ENCODE measurements at regions of chr5 and their contacts with region 1.

Region 1: GRCh38 chr5:83265318-83265717 is 188.0 kb downstream of the XRCC4 start:
- DNase-seq: no peak
- H3K4me3 ChIP-seq: no peak overlapping the region
- H3K27ac ChIP-seq: no peak overlapping the region
- H3K4me1 ChIP-seq: no peaks in the 10 kb centered on the region
- CTCF ChIP-seq: no peak

Region 2: DNA sequence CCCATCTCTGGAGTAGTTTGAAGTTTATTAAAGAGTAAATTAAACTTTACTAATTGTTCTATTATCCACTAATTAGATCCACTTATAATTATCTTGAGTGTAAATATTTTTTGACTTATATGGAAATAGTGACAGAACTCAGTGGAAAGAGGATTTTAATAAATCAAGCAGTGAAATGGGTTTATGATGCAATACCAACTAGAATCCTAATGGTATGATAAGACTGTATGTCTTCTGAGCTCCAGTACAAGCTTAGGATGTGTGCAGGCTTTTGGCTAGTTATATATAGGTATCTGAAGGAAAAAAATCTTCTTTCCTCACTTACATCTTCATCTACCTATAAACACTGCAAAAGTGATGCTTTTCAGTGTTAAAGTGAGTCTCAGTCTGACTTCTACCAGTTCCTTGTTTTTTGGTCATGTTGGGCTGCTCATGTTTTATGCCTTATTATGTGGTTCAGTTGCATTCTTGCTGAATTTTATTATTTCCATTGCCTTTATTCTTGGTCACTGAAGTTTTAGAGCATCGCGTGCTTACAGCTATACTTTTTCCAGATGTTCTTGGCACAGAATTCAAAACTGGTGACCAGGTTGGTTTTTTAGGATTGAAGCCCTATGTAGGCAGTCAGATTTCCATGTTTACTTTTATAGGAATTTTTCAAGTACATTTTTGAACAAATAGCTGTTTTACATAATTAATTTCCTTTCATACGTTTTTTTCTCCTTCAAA is 157.5 kb before region 1 on chr5:
- CTCF ChIA-PET with region 1: no interaction called
- POLR2A ChIA-PET with region 1: no interaction called
- intact Hi-C with region 1: no loop called
- DNase-seq: no peak
- H3K4me3 ChIP-seq: no peak overlapping the region
- H3K27ac ChIP-seq: no peak overlapping the region
- H3K4me1 ChIP-seq: no peaks in the 10 kb centered on the region
- CTCF ChIP-seq: no peak

Region 3: DNA sequence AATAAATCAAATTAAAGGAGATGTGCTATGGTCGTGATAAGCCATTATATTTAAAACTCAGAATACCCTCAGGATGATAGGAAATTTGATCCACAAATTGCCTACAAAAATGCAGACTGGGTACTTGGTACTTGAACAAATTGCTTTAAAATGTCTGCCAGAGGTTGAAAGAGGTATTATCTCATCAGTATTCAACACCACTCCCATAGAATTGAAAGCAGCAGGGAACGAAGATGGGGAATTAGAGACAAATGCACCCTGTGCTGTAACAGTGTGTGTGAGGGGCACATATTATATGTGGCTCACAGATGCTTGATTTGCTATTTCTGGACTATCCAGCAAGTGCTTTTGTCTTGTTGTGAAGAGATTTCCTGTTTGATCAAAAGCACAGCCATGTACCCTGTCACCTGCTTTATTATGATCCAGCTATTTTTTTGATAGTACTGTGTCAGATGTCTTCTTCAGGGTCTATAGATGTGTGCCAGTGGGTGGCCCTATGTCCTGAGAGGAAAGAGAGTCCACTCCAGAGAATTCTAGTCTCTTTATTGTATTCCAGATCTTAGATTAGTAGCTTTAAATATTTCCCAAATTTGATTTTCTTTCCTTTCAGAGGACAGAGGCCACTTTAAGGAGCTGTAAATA is 67.9 kb before region 1 on chr5:
- CTCF ChIA-PET with region 1: no interaction called
- POLR2A ChIA-PET with region 1: interaction called, 10 read pairs
- intact Hi-C with region 1: no loop called
- DNase-seq: peak; percentile 10
- H3K4me3 ChIP-seq: no peak overlapping the region
- H3K27ac ChIP-seq: no peak overlapping the region
- H3K4me1 ChIP-seq: peaks cover 9% of the 10 kb centered on the region
- CTCF ChIP-seq: no peak

Region 4: GRCh38 chr5:83220331-83220730 is 45.0 kb before region 1 on chr5:
- CTCF ChIA-PET with region 1: no interaction called
- POLR2A ChIA-PET with region 1: no interaction called
- intact Hi-C with region 1: no loop called
- DNase-seq: no peak
- H3K4me3 ChIP-seq: no peak overlapping the region
- H3K27ac ChIP-seq: no peak overlapping the region
- H3K4me1 ChIP-seq: no peaks in the 10 kb centered on the region
- CTCF ChIP-seq: no peak

Region 5: GRCh38 chr5:83294246-83294645 is 28.9 kb after region 1 on chr5:
- CTCF ChIA-PET with region 1: no interaction called
- POLR2A ChIA-PET with region 1: no interaction called
- intact Hi-C with region 1: no loop called
- DNase-seq: no peak
- H3K4me3 ChIP-seq: no peak overlapping the region
- H3K27ac ChIP-seq: no peak overlapping the region
- H3K4me1 ChIP-seq: no peaks in the 10 kb centered on the region
- CTCF ChIP-seq: no peak

Region 6: GRCh38 chr5:83348281-83348780 is 83.0 kb after region 1 on chr5:
- CTCF ChIA-PET with region 1: no interaction called
- POLR2A ChIA-PET with region 1: no interaction called
- intact Hi-C with region 1: no loop called
- DNase-seq: no peak
- H3K4me3 ChIP-seq: no peak overlapping the region
- H3K27ac ChIP-seq: no peak overlapping the region
- H3K4me1 ChIP-seq: no peaks in the 10 kb centered on the region
- CTCF ChIP-seq: no peak